Natural killer cell (primary cell): ENCODE measurements at regions of chr10 and their contacts with region 1.

Region 1: GRCh38 chr10:132452631-132453469 is 55.9 kb downstream of the PWWP2B start:
- DNase-seq: peak; percentile 91 to 96
- ATAC-seq: peak; percentile 84 to 93 (median 88)
- H3K4me3 ChIP-seq: no peak overlapping the region
- H3K4me3 Mint-ChIP-seq: peak overlapping the region; percentile 55
- H3K27ac ChIP-seq: peak overlapping the region; percentile 63
- H3K27ac Mint-ChIP-seq: peak overlapping the region; percentile 54 to 89
- H3K4me1 ChIP-seq: peaks cover 43% of the 10 kb centered on the region
- H3K4me1 Mint-ChIP-seq: peaks cover 4 to 37% of the 10 kb centered on the region in 2 donors
- H3K27me3 ChIP-seq: no peaks in the 10 kb centered on the region
- H3K27me3 Mint-ChIP-seq: no peaks in the 10 kb centered on the region
- CTCF ChIP-seq: peak; percentile 96

Region 2: DNA sequence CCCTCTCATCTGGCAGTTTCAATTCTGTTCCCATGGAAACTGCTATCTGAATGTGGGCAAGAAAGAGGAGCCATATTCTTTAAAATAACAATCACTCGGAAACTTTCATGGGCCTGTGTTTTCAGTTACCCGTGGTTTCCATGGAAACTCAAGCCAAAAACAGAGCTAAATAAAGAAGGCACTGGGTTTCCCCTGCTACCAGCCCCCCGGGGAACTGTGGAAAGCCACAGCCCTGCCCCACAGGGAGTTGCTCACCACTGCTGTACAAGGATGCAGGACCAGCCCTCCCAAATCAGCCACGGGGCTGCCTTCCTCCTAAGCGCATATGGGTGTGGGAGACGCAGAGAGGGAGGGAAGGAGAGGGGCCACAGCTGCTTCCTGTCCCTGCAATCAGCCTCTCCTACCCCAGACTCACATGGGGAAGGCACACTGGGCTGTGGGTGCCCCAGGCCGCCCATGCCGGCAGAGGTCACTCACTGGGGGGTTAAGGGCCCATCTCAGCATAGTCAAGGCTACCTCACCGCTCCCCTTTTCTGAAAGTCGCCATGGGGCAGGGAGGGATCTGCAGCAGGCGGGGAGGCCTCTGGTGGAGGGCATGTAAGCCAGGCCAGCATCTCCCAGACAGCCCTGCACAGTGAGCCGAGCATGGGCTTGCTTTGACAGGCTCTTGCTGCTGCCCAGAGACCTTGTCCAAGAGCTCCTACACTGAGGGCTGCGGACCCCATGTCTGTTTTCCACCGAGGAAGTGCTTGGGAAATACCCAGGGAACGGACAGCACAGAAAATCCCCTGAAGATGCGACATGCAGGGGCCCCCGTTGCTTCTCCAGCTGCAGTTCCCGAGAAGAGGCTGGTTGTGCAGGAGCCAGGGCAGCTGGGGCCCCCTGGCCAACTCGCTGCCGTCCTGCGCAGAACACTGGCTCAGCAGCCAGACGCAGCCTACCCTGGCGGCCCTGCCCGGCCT is 709.4 kb before region 1 on chr10:
- intact Hi-C with region 1: no loop called
- DNase-seq: peak in 1 of 2 donors; percentile 19
- ATAC-seq: no peak
- H3K4me3 ChIP-seq: no peak overlapping the region
- H3K4me3 Mint-ChIP-seq: no peak overlapping the region
- H3K27ac ChIP-seq: no peak overlapping the region
- H3K27ac Mint-ChIP-seq: no peak overlapping the region
- H3K4me1 ChIP-seq: peaks cover 7% of the 10 kb centered on the region
- H3K4me1 Mint-ChIP-seq: peaks cover 5 to 12% of the 10 kb centered on the region in 2 donors
- H3K27me3 ChIP-seq: no peaks in the 10 kb centered on the region
- H3K27me3 Mint-ChIP-seq: peaks cover 21 to 31% of the 10 kb centered on the region in 2 donors
- CTCF ChIP-seq: no peak

Region 3: GRCh38 chr10:132163278-132163765 is 289.5 kb before region 1 on chr10:
- intact Hi-C with region 1: loop called (anchors 10 kb)
- DNase-seq: peak in 1 of 2 donors; percentile 64
- ATAC-seq: peak in 2 of 3 donors; percentile 14 to 54
- H3K4me3 ChIP-seq: no peak overlapping the region
- H3K4me3 Mint-ChIP-seq: no peak overlapping the region
- H3K27ac ChIP-seq: no peak overlapping the region
- H3K27ac Mint-ChIP-seq: peak overlapping the region in 1 of 2 donors; percentile 92
- H3K4me1 ChIP-seq: peaks cover 32% of the 10 kb centered on the region
- H3K4me1 Mint-ChIP-seq: peaks cover 17 to 37% of the 10 kb centered on the region in 2 donors
- H3K27me3 ChIP-seq: no peaks in the 10 kb centered on the region
- H3K27me3 Mint-ChIP-seq: peaks cover 0 to 8% of the 10 kb centered on the region in 2 donors
- CTCF ChIP-seq: no peak

Region 4: GRCh38 chr10:132223156-132223590 is 229.7 kb before region 1 on chr10:
- intact Hi-C with region 1: loop called (anchors 10 kb)
- DNase-seq: peak; percentile 54 to 76
- ATAC-seq: peak; percentile 67 to 95 (median 94)
- H3K4me3 ChIP-seq: no peak overlapping the region
- H3K4me3 Mint-ChIP-seq: no peak overlapping the region
- H3K27ac ChIP-seq: no peak overlapping the region
- H3K27ac Mint-ChIP-seq: no peak overlapping the region
- H3K4me1 ChIP-seq: peaks cover 23% of the 10 kb centered on the region
- H3K4me1 Mint-ChIP-seq: peaks cover 0 to 10% of the 10 kb centered on the region in 2 donors
- H3K27me3 ChIP-seq: no peaks in the 10 kb centered on the region
- H3K27me3 Mint-ChIP-seq: no peaks in the 10 kb centered on the region
- CTCF ChIP-seq: peak; percentile 56

Region 5: DNA sequence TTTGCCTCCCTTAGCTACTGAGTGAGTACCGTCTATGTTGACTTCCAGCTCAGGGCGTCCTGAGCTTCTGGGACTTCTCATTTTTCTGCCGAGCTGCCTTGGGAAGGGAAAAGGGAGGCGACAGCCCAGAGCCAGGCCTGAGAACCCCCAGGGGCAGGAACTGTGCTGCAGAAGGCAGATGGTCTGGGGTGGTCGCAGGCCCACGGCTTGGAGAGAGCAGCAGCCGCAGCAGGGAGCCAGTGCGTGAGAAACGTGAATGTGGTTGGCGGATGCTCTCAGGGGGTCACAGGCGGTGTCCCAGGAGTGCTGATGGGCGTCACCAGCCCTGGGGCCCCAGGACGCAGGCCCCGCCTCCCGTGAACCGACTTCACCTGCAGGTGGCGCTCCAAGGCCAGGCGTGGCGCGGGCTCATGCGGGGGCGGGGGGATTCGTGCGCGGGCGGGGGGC is 65.1 kb before region 1 on chr10:
- intact Hi-C with region 1: loop called (anchors 1 kb)
- DNase-seq: peak; percentile 84 to 90
- ATAC-seq: peak; percentile 86 to 90 (median 87)
- H3K4me3 ChIP-seq: no peak overlapping the region
- H3K4me3 Mint-ChIP-seq: peak overlapping the region; percentile 58
- H3K27ac ChIP-seq: no peak overlapping the region
- H3K27ac Mint-ChIP-seq: peak overlapping the region; percentile 7 to 56
- H3K4me1 ChIP-seq: peaks cover 14% of the 10 kb centered on the region
- H3K4me1 Mint-ChIP-seq: peaks cover 6 to 22% of the 10 kb centered on the region in 2 donors
- H3K27me3 ChIP-seq: no peaks in the 10 kb centered on the region
- H3K27me3 Mint-ChIP-seq: no peaks in the 10 kb centered on the region
- CTCF ChIP-seq: peak; percentile 51